H1 (cell line): ENCODE measurements at regions of chr3 and their contacts with region 1.

Region 1: GRCh38 chr3:174440741-174441587 is 418.2 kb upstream of the NAALADL2 start:
- DNase-seq: peak; percentile 68 to 88
- H3K4me3 ChIP-seq: peak overlapping the region; percentile 78 to 88 (median 80)
- H3K27ac ChIP-seq: peak overlapping the region; percentile 97
- H3K4me1 ChIP-seq: peaks cover 0 to 6% (median 2%) of the 10 kb centered on the region in 4 experiments; a peak in 4 of 7 replicates
- H3K27me3 ChIP-seq: no peaks in the 10 kb centered on the region
- CTCF ChIP-seq: peak in 1 of 3 experiments; percentile 1; a peak in 1 of 4 replicates
- EP300 ChIP-seq: no peak
- POLR2A ChIP-seq: peak; percentile 81 to 87
- RAD21 ChIP-seq: no peak; a peak in 1 of 4 replicates

Region 2: GRCh38 chr3:174147798-174148197 is 293.2 kb before region 1 on chr3:
- CTCF ChIA-PET with region 1: no interaction called
- POLR2A ChIA-PET with region 1: no interaction called
- DNase-seq: no peak
- H3K4me3 ChIP-seq: no peak overlapping the region
- H3K27ac ChIP-seq: no peak overlapping the region
- H3K4me1 ChIP-seq: no peaks in the 10 kb centered on the region
- H3K27me3 ChIP-seq: peaks cover 0 to 1% (median 0%) of the 10 kb centered on the region in 4 experiments; a peak in 1 of 7 replicates
- CTCF ChIP-seq: no peak
- EP300 ChIP-seq: no peak
- POLR2A ChIP-seq: no peak
- RAD21 ChIP-seq: no peak

Region 3: GRCh38 chr3:174524203-174524602 is 83.2 kb after region 1 on chr3:
- CTCF ChIA-PET with region 1: no interaction called
- POLR2A ChIA-PET with region 1: no interaction called
- DNase-seq: no peak
- H3K4me3 ChIP-seq: no peak overlapping the region
- H3K27ac ChIP-seq: no peak overlapping the region
- H3K4me1 ChIP-seq: no peaks in the 10 kb centered on the region
- H3K27me3 ChIP-seq: peaks cover 0 to 2% (median 0%) of the 10 kb centered on the region in 4 experiments; a peak in 1 of 7 replicates
- CTCF ChIP-seq: no peak
- EP300 ChIP-seq: no peak
- POLR2A ChIP-seq: no peak
- RAD21 ChIP-seq: no peak

Region 4: DNA sequence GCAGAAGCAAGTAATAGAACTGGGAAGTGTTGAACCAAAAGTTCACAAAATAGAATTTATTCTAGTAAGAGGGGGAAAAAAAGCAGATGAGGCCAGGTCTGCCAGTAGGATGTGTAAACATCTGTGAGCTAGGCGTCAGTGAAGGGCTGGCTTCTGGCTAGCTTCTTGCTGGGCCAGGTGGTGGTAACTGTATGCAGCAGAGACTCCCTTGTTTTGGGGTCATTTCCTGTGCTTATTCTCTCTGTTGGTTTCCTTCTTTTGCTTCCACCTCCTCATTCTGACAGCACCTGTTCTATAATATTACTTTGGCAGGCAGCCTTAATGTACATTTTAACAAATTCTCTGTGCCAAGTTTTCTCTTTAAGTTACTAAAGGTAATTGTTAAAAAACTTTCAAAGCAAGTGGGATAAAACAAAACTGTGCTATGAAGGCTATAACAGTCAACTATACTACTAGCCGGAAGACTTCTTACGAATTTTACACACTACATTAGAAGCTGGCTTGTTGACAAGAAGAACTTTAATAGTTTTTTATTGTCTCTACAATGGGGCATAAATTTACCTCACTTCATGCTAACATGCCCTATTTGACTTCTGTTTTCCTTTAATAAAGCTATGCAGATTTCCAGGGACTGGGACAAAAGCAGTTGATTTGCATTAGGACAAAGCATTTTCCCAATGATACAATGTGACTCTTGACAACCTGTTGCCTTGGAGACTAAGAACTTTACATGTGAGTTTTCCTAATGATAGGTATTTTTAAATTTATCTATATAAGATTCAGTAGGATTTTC is 99.3 kb after region 1 on chr3:
- CTCF ChIA-PET with region 1: no interaction called
- POLR2A ChIA-PET with region 1: interaction called, 18 read pairs
- DNase-seq: peak in 1 of 2 experiments; percentile 19
- H3K4me3 ChIP-seq: peak overlapping the region in 1 of 4 experiments; percentile 48; a peak in 2 of 8 replicates
- H3K27ac ChIP-seq: peak overlapping the region; percentile 77
- H3K4me1 ChIP-seq: peaks cover 2 to 18% (median 9%) of the 10 kb centered on the region in 4 experiments; a peak in 6 of 7 replicates
- H3K27me3 ChIP-seq: no peaks in the 10 kb centered on the region
- CTCF ChIP-seq: no peak
- EP300 ChIP-seq: peak in 1 of 2 experiments; percentile 32; a peak in 1 of 3 replicates
- POLR2A ChIP-seq: peak in 1 of 2 experiments; percentile 61; a peak in 2 of 3 replicates
- RAD21 ChIP-seq: peak; percentile 18 to 30; a peak in 2 of 4 replicates